Astrocyte of the cerebellum (primary cell): ENCODE measurements at regions of chr6 and their contacts with region 1.

Region 1: GRCh38 chr6:32984605-32985389 is 16.4 kb downstream of the BRD2 start:
- DNase-seq: peak; percentile 76
- H3K4me3 ChIP-seq: no peak overlapping the region
- CTCF ChIP-seq: peak; percentile 86

Region 2: DNA sequence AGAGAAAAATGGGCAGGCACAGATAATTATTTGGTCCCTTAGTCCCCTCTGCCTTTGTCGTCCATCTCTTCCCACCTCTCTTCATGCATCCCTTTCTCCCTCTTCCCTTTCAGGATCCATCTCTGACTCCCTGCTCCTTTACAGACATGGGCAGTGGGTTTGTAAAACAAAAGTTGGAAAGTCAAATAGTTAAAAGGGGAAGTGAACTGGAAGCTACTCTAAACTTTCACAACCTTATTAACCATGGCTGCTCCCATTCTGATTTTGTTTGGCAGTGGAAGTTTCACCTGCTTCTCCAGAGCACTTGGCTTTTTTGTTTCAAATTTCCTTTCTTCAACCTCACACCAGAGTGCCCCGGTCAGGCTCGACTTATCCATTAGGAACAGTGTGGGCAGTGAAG is 242.4 kb before region 1 on chr6:
- in situ Hi-C with region 1: no loop called
- DNase-seq: no peak
- H3K4me3 ChIP-seq: no peak overlapping the region
- CTCF ChIP-seq: no peak

Region 3: DNA sequence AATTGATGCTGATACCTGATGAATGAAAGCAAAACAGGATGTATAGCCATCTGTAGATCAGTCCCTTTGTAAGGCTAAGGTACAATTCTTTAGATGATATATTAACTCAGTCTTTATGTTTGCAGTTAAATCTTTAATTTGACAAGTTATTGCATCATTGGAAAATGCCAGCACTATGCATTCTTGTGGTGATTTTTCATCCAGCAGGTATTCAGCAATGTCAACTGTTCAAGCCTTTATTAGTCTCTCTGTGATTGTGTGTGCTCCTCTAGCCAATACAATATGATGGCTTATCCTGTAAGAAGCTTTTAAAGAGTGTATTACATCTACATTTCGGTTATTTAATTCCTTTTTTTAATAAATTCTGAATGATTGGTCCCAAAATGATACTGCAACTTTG is 78.3 kb before region 1 on chr6:
- in situ Hi-C with region 1: loop called (anchors 5 kb)
- DNase-seq: no peak
- H3K4me3 ChIP-seq: no peak overlapping the region
- CTCF ChIP-seq: no peak

Region 4: GRCh38 chr6:33040157-33040556 is 55.4 kb after region 1 on chr6:
- in situ Hi-C with region 1: no loop called
- DNase-seq: no peak
- H3K4me3 ChIP-seq: no peak overlapping the region
- CTCF ChIP-seq: no peak